ENCODE measurements at regions of chr9 and their contacts with region 1.

Region 1: DNA sequence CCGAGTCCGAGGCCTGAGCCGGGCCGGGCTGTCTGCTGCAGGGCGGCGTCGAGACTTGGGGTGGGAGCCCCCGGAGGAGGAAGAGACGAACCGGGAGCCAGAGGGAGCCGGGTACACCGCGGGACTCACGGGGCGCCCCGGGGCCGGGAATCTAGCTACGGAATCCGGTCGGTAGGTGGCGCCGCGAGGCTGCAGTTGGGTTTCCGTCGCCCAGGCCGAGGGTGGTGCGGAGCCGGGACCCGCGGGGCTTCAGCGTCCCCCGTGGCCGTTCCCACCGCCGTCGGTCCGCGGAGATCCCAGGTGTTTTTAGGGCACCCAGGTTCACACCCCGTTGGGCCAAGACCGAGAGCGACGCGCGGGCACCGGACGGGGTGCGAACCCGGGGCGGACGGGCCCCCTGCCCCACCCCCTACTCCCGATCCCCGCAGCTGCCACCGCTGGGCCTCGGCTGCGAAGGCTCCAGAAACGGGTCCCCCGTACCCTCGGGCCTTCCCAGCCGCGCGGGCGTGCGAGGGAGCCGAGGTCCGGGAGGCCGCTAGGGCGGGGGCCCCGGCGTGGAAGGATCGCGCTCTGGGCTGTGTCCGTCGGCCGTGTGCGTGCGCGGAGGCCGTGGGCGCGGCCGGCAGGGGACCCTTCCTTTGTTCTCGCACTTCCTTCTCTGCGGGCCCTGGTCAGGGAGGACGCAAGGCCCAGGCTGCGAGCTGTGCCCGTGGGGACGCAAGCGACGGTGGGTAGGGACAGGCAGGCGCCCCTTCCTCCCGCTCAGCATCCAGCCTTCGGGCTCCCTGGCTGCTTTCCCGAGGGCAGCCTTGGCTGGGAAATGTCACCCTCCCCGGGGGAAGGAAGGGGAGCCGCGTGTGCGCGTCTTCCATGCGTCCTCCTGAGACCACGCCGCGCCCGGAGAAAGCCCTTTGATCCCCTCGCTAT is 146.6 kb downstream of the GAPVD1 start:
- DNase-seq: peak; percentile 97
- H3K4me3 ChIP-seq: peak overlapping the region; percentile 46 to 68
- H3K27ac ChIP-seq: no peak overlapping the region
- H3K4me1 ChIP-seq: peaks cover 0 to 5% of the 10 kb centered on the region in 2 experiments; a peak in 1 of 4 replicates
- H3K27me3 ChIP-seq: no peaks in the 10 kb centered on the region
- CTCF ChIP-seq: peak; percentile 84
- EP300 ChIP-seq: no peak
- RAD21 ChIP-seq: peak; percentile 87

Region 2: DNA sequence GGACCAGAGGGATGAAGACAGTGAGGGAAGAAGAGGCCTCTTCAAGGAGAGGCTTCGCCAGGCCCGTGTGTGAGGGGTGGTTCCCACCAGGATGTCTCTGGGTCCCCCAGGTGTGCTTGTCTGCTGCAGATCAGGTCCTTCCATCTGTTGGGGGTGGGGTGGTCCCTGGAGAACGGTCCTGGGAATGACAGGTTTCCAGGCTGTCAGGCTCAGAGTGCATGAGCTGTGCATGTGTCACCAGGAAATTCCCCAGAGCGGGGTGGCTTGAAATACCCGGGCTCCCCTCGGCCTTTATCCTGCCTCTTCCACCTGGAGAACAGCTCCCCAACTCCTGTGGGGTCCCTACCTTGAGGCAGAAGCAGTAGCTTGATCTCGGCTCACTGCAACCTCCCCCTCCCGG is 27.8 kb before region 1 on chr9:
- CTCF ChIA-PET with region 1: interaction called, 10 read pairs
- POLR2A ChIA-PET with region 1: no interaction called
- DNase-seq: no peak
- H3K4me3 ChIP-seq: no peak overlapping the region
- H3K27ac ChIP-seq: no peak overlapping the region
- H3K4me1 ChIP-seq: peaks cover 0 to 21% of the 10 kb centered on the region in 2 experiments; a peak in 1 of 4 replicates
- H3K27me3 ChIP-seq: no peaks in the 10 kb centered on the region
- CTCF ChIP-seq: no peak
- EP300 ChIP-seq: no peak
- RAD21 ChIP-seq: no peak

Region 3: GRCh38 chr9:125418404-125418803 is 10.2 kb after region 1 on chr9:
- CTCF ChIA-PET with region 1: interaction called, 30 read pairs
- POLR2A ChIA-PET with region 1: no interaction called
- DNase-seq: no peak
- H3K4me3 ChIP-seq: no peak overlapping the region
- H3K27ac ChIP-seq: peak overlapping the region in 1 of 2 experiments; percentile 37; a peak in 1 of 4 replicates
- H3K4me1 ChIP-seq: no peaks in the 10 kb centered on the region
- H3K27me3 ChIP-seq: no peaks in the 10 kb centered on the region
- CTCF ChIP-seq: no peak
- EP300 ChIP-seq: no peak
- RAD21 ChIP-seq: no peak

Region 4: GRCh38 chr9:125538092-125538473 is 129.8 kb after region 1 on chr9:
- CTCF ChIA-PET with region 1: interaction called, 26 read pairs
- POLR2A ChIA-PET with region 1: no interaction called
- DNase-seq: no peak
- H3K4me3 ChIP-seq: peak overlapping the region in 1 of 2 experiments; percentile 19; a peak in 1 of 4 replicates
- H3K27ac ChIP-seq: peak overlapping the region; percentile 20 to 87; a peak in 3 of 4 replicates
- H3K4me1 ChIP-seq: peaks cover 36 to 49% of the 10 kb centered on the region in 2 experiments
- H3K27me3 ChIP-seq: no peaks in the 10 kb centered on the region
- CTCF ChIP-seq: no peak
- EP300 ChIP-seq: peak in 1 of 2 experiments; percentile 92; a peak in 2 of 4 replicates
- RAD21 ChIP-seq: no peak

Region 5: DNA sequence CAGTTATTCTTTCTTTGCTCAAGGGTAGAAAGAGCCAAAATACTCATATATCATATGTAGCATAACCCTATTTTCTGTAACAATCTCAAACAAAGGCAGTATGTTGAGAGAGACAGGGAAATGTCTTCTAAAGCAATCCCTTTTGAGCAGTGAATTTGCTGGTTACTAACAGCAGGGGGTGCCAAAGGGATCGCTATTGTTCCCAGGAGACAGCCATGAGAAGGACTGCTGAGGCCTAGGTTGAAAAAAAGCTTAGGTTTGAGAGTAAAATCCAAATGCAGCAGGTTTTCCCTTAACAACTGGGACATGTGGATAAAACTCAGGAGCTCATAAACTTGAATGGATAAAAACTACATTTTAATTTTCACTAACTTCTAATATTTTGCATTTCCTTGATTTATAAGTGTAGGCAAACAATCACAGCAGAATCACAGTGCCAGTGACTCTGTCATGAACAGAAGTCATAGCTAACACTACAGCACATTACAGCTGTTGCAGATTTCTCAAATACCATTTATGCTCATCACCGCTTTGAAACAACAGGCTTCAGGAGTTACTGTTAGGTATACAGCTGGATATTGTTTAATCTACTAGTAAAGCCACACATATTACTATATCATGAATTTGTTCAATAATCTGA is 150.3 kb after region 1 on chr9:
- CTCF ChIA-PET with region 1: interaction called, 21 read pairs
- POLR2A ChIA-PET with region 1: no interaction called
- DNase-seq: peak; percentile 68
- H3K4me3 ChIP-seq: no peak overlapping the region; a peak in 1 of 4 replicates
- H3K27ac ChIP-seq: peak overlapping the region; percentile 43 to 58
- H3K4me1 ChIP-seq: peaks cover 4 to 6% of the 10 kb centered on the region in 2 experiments; a peak in 3 of 4 replicates
- H3K27me3 ChIP-seq: no peaks in the 10 kb centered on the region
- CTCF ChIP-seq: peak; percentile 86
- EP300 ChIP-seq: no peak
- RAD21 ChIP-seq: peak; percentile 93

Region 6: DNA sequence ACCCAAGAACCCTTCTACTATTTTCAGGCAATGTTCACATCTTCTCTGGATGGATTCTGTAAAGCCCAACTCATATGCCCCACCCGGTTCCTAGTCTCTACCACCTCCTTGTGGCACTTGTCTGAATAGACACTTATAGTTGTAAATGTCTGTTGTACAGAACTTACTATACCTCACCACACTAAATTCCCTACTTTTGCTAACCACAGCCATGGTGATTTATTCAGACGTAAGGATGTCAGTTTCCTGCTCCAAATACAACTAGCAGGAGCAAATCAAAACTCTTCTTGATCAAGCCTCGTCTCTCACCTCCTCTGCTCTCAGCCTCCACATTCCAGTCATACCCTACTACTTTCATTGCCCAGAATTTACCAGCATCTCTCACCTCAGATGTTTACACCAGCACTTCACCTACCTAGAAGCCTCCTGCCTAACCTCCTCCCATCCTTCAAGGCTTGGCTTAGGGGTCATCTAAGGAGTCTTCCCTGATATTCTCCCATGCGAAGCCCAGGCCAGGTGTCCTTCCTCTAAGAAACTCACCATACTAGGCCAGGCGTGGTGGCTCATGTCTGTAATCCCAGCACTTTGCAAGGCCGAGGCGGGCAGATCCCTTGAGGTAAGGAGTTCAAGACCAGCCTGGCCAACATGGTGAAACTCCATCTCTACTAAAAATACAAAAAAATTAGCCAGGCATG is 223.3 kb after region 1 on chr9:
- CTCF ChIA-PET with region 1: interaction called, 13 read pairs
- POLR2A ChIA-PET with region 1: no interaction called
- DNase-seq: peak; percentile 71
- H3K4me3 ChIP-seq: no peak overlapping the region
- H3K27ac ChIP-seq: 0 out of 4 replicates have a peak overlapping the region, but pooled peaks of 1 of the 2 experiments have one; percentile 11
- H3K4me1 ChIP-seq: peaks cover 13 to 32% of the 10 kb centered on the region in 2 experiments; a peak in 3 of 4 replicates
- H3K27me3 ChIP-seq: no peaks in the 10 kb centered on the region
- CTCF ChIP-seq: peak; percentile 68
- EP300 ChIP-seq: no peak
- RAD21 ChIP-seq: peak; percentile 90

Region 7: GRCh38 chr9:126490871-126491567 is 1082.8 kb after region 1 on chr9:
- CTCF ChIA-PET with region 1: interaction called, 19 read pairs
- POLR2A ChIA-PET with region 1: no interaction called
- DNase-seq: peak; percentile 69
- H3K4me3 ChIP-seq: no peak overlapping the region
- H3K27ac ChIP-seq: no peak overlapping the region
- H3K4me1 ChIP-seq: no peaks in the 10 kb centered on the region
- H3K27me3 ChIP-seq: no peaks in the 10 kb centered on the region
- CTCF ChIP-seq: peak; percentile 96
- EP300 ChIP-seq: no peak
- RAD21 ChIP-seq: peak; percentile 93

Measured in SK-N-SH (cell line).